B cell (primary cell): ENCODE measurements at regions of chr3 and their contacts with region 1.

Region 1: GRCh38 chr3:25789596-25790556 is at the start of gene OXSM:
- DNase-seq: peak; percentile 98
- ATAC-seq: peak; percentile 94
- H3K4me3 ChIP-seq: peak within 1 kb of the TSS; percentile 60 to 95 (median 67)
- H3K4me3 Mint-ChIP-seq: peak within 1 kb of the TSS; percentile 97
- H3K27ac ChIP-seq: peak within 1 kb of the TSS; percentile 95 to 96
- H3K27ac Mint-ChIP-seq: peak within 1 kb of the TSS; percentile 94
- H3K4me1 ChIP-seq: peaks cover 14 to 16% of the 10 kb centered on the region in 2 donors
- H3K4me1 Mint-ChIP-seq: peaks cover 39% of the 10 kb centered on the region
- H3K27me3 ChIP-seq: no peaks in the 10 kb centered on the region
- H3K27me3 Mint-ChIP-seq: no peaks in the 10 kb centered on the region
- CTCF ChIP-seq: no peak
- total RNA-seq, gene OXSM: 15.4 and 18.7 TPM in 2 replicates

Region 2: DNA sequence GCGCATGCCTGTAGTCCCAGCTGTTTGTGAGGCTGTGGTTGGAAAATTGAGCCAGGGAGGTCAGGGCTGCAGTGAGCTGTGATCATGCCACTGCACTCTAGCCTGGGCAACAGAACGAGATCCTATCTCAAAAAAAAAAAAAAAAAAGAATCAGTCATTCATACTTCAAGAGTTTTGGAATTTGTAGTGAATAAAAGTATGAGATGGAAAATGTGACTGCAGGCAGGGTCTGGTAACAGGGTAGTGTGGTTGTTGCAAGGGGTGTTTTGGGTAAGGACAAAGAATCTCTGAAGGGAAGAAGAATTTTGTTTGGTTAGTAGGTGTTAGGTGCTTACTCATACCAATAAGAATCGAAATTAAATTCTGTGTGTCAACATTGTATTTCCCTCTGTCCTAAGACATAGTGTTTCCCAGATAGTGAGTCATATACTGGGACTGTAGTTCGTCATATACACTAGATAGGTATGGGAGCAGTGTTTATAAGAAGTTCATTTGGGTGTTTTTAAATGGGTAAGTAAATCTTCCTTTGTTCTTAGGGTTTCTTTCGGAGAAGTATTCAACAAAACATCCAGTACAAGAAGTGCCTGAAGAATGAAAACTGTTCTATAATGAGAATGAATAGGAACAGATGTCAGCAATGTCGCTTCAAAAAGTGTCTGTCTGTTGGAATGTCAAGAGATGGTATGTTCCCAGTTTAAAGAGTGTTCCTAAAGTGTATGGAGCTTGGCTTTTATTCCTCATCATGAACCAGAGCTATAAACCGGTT is 1830.6 kb before region 1 on chr3:
- CTCF ChIA-PET with region 1: no interaction called
- POLR2A ChIA-PET with region 1: no interaction called
- intact Hi-C with region 1: loop called (anchors 10 kb)
- DNase-seq: no peak
- ATAC-seq: no peak
- H3K4me3 ChIP-seq: no peak overlapping the region
- H3K4me3 Mint-ChIP-seq: no peak overlapping the region
- H3K27ac ChIP-seq: no peak overlapping the region
- H3K27ac Mint-ChIP-seq: no peak overlapping the region
- H3K4me1 ChIP-seq: peaks cover 2 to 4% of the 10 kb centered on the region in 2 donors
- H3K4me1 Mint-ChIP-seq: peaks cover 16% of the 10 kb centered on the region
- H3K27me3 ChIP-seq: no peaks in the 10 kb centered on the region
- H3K27me3 Mint-ChIP-seq: no peaks in the 10 kb centered on the region
- CTCF ChIP-seq: no peak

Region 3: GRCh38 chr3:25074149-25074548 is 715.7 kb before region 1 on chr3:
- CTCF ChIA-PET with region 1: no interaction called
- POLR2A ChIA-PET with region 1: no interaction called
- intact Hi-C with region 1: no loop called
- DNase-seq: no peak
- ATAC-seq: no peak
- H3K4me3 ChIP-seq: no peak overlapping the region
- H3K4me3 Mint-ChIP-seq: no peak overlapping the region
- H3K27ac ChIP-seq: no peak overlapping the region
- H3K27ac Mint-ChIP-seq: no peak overlapping the region
- H3K4me1 ChIP-seq: no peaks in the 10 kb centered on the region
- H3K4me1 Mint-ChIP-seq: no peaks in the 10 kb centered on the region
- H3K27me3 ChIP-seq: no peaks in the 10 kb centered on the region
- H3K27me3 Mint-ChIP-seq: no peaks in the 10 kb centered on the region
- CTCF ChIP-seq: no peak

Region 4: DNA sequence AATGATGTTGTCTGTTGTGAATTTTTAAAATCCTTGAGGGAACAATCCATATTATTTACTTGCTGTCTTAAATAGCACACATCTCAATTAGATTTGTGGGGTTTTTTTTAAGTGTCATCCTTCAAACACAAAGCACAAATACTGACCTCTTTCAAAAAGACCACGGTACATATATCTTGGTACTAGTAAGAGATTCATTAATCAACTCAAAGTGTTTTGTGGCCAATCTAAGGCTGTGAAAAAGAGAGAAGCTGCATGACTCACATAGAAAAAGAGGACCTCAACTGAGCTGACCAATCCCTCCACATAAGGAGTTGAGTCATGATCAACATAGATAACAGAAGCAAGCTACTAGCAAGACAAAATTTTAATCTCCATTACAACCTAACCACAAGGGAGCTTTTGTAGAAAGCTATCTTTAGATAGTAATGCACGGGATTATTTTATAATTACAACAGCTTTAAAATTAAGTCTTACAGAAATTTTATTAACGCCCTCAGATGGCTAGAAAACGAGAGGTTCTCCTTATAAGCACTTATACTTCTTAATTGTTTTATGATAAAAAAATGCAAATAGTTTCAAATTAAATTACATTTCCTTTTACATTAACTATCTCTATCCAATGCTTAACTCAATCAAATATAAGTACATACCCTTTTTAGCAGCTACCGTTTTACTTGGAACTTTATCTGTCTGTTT is 185.6 kb before region 1 on chr3:
- CTCF ChIA-PET with region 1: no interaction called
- POLR2A ChIA-PET with region 1: no interaction called
- intact Hi-C with region 1: no loop called
- DNase-seq: no peak
- ATAC-seq: no peak
- H3K4me3 ChIP-seq: no peak overlapping the region
- H3K4me3 Mint-ChIP-seq: no peak overlapping the region
- H3K27ac ChIP-seq: no peak overlapping the region
- H3K27ac Mint-ChIP-seq: no peak overlapping the region
- H3K4me1 ChIP-seq: no peaks in the 10 kb centered on the region
- H3K4me1 Mint-ChIP-seq: no peaks in the 10 kb centered on the region
- H3K27me3 ChIP-seq: no peaks in the 10 kb centered on the region
- H3K27me3 Mint-ChIP-seq: no peaks in the 10 kb centered on the region
- CTCF ChIP-seq: no peak

Region 5: GRCh38 chr3:25723802-25724201 is 66.1 kb before region 1 on chr3:
- CTCF ChIA-PET with region 1: no interaction called
- POLR2A ChIA-PET with region 1: no interaction called
- intact Hi-C with region 1: no loop called
- DNase-seq: no peak
- ATAC-seq: no peak
- H3K4me3 ChIP-seq: no peak overlapping the region
- H3K4me3 Mint-ChIP-seq: no peak overlapping the region
- H3K27ac ChIP-seq: no peak overlapping the region
- H3K27ac Mint-ChIP-seq: no peak overlapping the region
- H3K4me1 ChIP-seq: no peaks in the 10 kb centered on the region
- H3K4me1 Mint-ChIP-seq: no peaks in the 10 kb centered on the region
- H3K27me3 ChIP-seq: no peaks in the 10 kb centered on the region
- H3K27me3 Mint-ChIP-seq: no peaks in the 10 kb centered on the region
- CTCF ChIP-seq: no peak

Region 6: DNA sequence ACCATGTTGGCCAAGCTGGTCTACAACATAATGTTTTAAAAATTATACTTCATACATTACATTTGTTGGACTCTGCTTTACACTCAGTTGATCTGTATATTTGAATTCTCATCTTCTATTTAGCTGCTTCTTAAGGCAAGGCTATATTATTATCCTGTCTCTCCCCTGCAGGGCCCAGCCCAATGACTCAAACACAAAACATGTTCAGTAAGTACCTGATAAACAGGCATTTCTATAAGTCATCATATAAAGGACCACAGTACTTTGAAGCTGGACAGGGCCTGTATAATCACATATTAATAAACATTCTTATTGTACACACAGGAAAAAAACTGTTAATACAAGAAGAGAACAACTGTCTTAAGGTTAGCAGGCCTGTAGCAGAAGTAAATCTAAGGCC is 42.8 kb before region 1 on chr3:
- CTCF ChIA-PET with region 1: no interaction called
- POLR2A ChIA-PET with region 1: no interaction called
- intact Hi-C with region 1: loop called (anchors 10 kb)
- DNase-seq: no peak
- ATAC-seq: no peak
- H3K4me3 ChIP-seq: no peak overlapping the region
- H3K4me3 Mint-ChIP-seq: no peak overlapping the region
- H3K27ac ChIP-seq: no peak overlapping the region
- H3K27ac Mint-ChIP-seq: no peak overlapping the region
- H3K4me1 ChIP-seq: no peaks in the 10 kb centered on the region
- H3K4me1 Mint-ChIP-seq: peaks cover 2% of the 10 kb centered on the region
- H3K27me3 ChIP-seq: no peaks in the 10 kb centered on the region
- H3K27me3 Mint-ChIP-seq: no peaks in the 10 kb centered on the region
- CTCF ChIP-seq: no peak

Region 7: DNA sequence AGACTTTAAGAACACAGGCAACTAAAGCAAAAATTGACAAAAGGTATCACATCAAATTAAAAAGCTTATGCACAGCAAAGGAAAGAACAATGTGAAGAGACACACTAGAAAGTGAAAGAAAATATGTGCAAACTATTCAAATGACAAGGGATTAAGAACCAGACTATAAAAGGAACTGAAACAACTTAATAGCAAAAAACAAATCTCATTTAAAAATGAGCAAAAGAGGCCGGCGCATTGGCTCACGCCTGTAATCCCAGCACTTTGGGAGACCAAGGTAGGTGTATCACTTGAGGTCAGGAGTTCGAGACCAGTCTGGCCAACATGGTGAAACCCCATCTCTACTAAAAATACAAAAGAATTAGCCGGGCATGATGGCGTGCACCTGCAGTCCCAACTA is 21.0 kb before region 1 on chr3:
- CTCF ChIA-PET with region 1: no interaction called
- POLR2A ChIA-PET with region 1: no interaction called
- intact Hi-C with region 1: loop called (anchors 1 kb)
- DNase-seq: peak; percentile 69
- ATAC-seq: peak; percentile 88
- H3K4me3 ChIP-seq: peak overlapping the region in 3 of 5 experiments; percentile 6 to 42 (median 15)
- H3K4me3 Mint-ChIP-seq: peak overlapping the region; percentile 76
- H3K27ac ChIP-seq: peak overlapping the region; percentile 60 to 71
- H3K27ac Mint-ChIP-seq: peak overlapping the region; percentile 88
- H3K4me1 ChIP-seq: peaks cover 15 to 18% of the 10 kb centered on the region in 2 donors
- H3K4me1 Mint-ChIP-seq: peaks cover 45% of the 10 kb centered on the region
- H3K27me3 ChIP-seq: no peaks in the 10 kb centered on the region
- H3K27me3 Mint-ChIP-seq: no peaks in the 10 kb centered on the region
- CTCF ChIP-seq: no peak